Uterus (tissue), 4 donors: ENCODE measurements at regions of chr15 and their contacts with region 1.

Region 1: GRCh38 chr15:81265944-81266775 is 57.8 kb downstream of the STARD5 start:
- DNase-seq: peak; percentile 83 to 85
- H3K4me3 ChIP-seq: no peak overlapping the region
- H3K27ac ChIP-seq: peak overlapping the region; percentile 8 to 52
- H3K4me1 ChIP-seq: peaks cover 0 to 5% of the 10 kb centered on the region in 2 donors
- H3K27me3 ChIP-seq: no peaks in the 10 kb centered on the region
- CTCF ChIP-seq: peak; percentile 86 to 91 (median 88)
- POLR2A ChIP-seq: no peak

Region 2: DNA sequence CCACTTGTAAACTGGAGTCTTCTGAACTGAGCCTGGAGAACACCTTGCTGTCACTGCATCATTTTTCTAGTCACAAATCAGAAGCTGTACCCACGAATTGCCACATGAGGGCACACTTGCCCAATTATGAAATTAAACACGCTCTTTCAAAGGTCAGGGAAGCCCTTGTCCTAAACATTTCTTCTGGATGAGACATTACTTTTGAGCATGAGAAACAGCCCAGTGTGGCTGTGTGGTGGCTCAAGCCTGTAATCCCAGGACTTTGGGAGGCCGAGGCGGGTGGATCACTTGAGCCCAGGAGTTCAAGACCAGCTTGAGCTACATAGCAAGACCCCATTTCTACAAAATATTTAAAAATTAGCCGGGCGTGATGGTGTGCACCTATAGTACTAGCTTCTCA is 159.6 kb before region 1 on chr15:
- intact Hi-C with region 1: loop called (anchors 10 kb)
- DNase-seq: peak; percentile 56 to 57
- H3K4me3 ChIP-seq: no peak overlapping the region
- H3K27ac ChIP-seq: no peak overlapping the region
- H3K4me1 ChIP-seq: no peaks in the 10 kb centered on the region
- H3K27me3 ChIP-seq: no peaks in the 10 kb centered on the region
- CTCF ChIP-seq: peak; percentile 70 to 82 (median 75)
- POLR2A ChIP-seq: no peak

Region 3: GRCh38 chr15:81155375-81156218 is 110.6 kb before region 1 on chr15:
- intact Hi-C with region 1: loop called (anchors 10 kb)
- DNase-seq: peak; percentile 75 to 79
- H3K4me3 ChIP-seq: no peak overlapping the region
- H3K27ac ChIP-seq: peak overlapping the region in 1 of 2 donors; percentile 78
- H3K4me1 ChIP-seq: peaks cover 0 to 5% of the 10 kb centered on the region in 2 donors
- H3K27me3 ChIP-seq: no peaks in the 10 kb centered on the region
- CTCF ChIP-seq: peak; percentile 55 to 80 (median 75)
- POLR2A ChIP-seq: no peak

Region 4: GRCh38 chr15:81182756-81183438 is 83.3 kb before region 1 on chr15:
- intact Hi-C with region 1: no loop called
- DNase-seq: no peak
- H3K4me3 ChIP-seq: peak overlapping the region; percentile 25 to 44
- H3K27ac ChIP-seq: peak overlapping the region; percentile 67 to 73
- H3K4me1 ChIP-seq: no peaks in the 10 kb centered on the region
- H3K27me3 ChIP-seq: no peaks in the 10 kb centered on the region
- CTCF ChIP-seq: peak in 1 of 4 experiments; percentile 23
- POLR2A ChIP-seq: no peak

Region 5: GRCh38 chr15:81625896-81626295 is 359.7 kb after region 1 on chr15:
- intact Hi-C with region 1: no loop called
- DNase-seq: no peak
- H3K4me3 ChIP-seq: no peak overlapping the region
- H3K27ac ChIP-seq: no peak overlapping the region
- H3K4me1 ChIP-seq: no peaks in the 10 kb centered on the region
- H3K27me3 ChIP-seq: no peaks in the 10 kb centered on the region
- CTCF ChIP-seq: no peak
- POLR2A ChIP-seq: no peak